CD4-positive, alpha-beta memory T cell (primary cell): ENCODE measurements at regions of chr5 and their contacts with region 1.

Region 1: GRCh38 chr5:671459-672328 is 21.5 kb downstream of the TPPP start:
- DNase-seq: peak; percentile 73 to 80 (median 77)
- H3K4me3 ChIP-seq: peak overlapping the region in 1 of 2 donors; percentile 4
- H3K4me3 Mint-ChIP-seq: peak overlapping the region in 5 of 8 donors; percentile 79 to 92 (median 82)
- H3K27ac ChIP-seq: peak overlapping the region; percentile 59
- H3K27ac Mint-ChIP-seq: peak overlapping the region; percentile 29 to 100 (median 99)
- H3K4me1 ChIP-seq: peaks cover 29% of the 10 kb centered on the region
- H3K4me1 Mint-ChIP-seq: peaks cover 7 to 26% (median 13%) of the 10 kb centered on the region in 4 donors
- H3K27me3 ChIP-seq: no peaks in the 10 kb centered on the region
- H3K27me3 Mint-ChIP-seq: peaks cover 0 to 3% of the 10 kb centered on the region in 2 donors

Region 2: DNA sequence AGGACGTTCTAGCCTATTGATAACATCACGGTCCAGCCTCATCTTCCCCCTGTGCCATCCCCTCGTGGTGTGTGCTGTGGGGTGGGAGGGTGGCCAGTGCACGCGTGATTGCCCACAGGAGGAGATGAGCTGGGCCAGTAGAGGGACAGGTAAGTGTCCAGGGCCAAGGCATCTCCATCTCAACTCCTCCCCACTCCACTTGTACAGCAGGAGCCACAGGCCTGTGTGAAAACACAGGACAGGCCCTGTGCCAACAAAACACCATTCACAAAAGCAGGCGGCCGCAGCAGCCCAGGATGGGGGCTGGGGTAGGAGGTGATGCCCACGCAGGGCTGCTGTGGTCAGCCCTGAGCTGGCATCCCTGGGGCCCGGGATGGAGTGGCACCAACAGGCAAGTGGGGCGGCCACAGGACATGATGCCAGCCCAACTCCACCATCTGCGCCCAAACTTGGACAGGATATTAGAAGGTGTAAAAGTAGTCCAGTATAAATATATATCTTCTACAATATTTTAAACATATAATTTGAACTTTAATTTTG is 11.1 kb before region 1 on chr5:
- CTCF ChIA-PET with region 1: no interaction called
- POLR2A ChIA-PET with region 1: no interaction called
- intact Hi-C with region 1: no loop called
- DNase-seq: no peak
- H3K4me3 ChIP-seq: no peak overlapping the region
- H3K4me3 Mint-ChIP-seq: no peak overlapping the region
- H3K27ac ChIP-seq: no peak overlapping the region
- H3K27ac Mint-ChIP-seq: peak overlapping the region in 3 of 7 donors; percentile 18 to 62 (median 30)
- H3K4me1 ChIP-seq: no peaks in the 10 kb centered on the region
- H3K4me1 Mint-ChIP-seq: peaks cover 0 to 4% (median 2%) of the 10 kb centered on the region in 4 donors
- H3K27me3 ChIP-seq: no peaks in the 10 kb centered on the region
- H3K27me3 Mint-ChIP-seq: no peaks in the 10 kb centered on the region

Region 3: GRCh38 chr5:691817-692528 is 20.3 kb after region 1 on chr5:
- CTCF ChIA-PET with region 1: no interaction called
- POLR2A ChIA-PET with region 1: no interaction called
- intact Hi-C with region 1: loop called (anchors 2 kb)
- DNase-seq: peak in 1 of 5 donors; percentile 11
- H3K4me3 ChIP-seq: peak overlapping the region in 1 of 2 donors; percentile 35
- H3K4me3 Mint-ChIP-seq: peak overlapping the region; percentile 41 to 82 (median 81)
- H3K27ac ChIP-seq: no peak overlapping the region
- H3K27ac Mint-ChIP-seq: peak overlapping the region in 4 of 7 donors; percentile 27 to 86 (median 55)
- H3K4me1 ChIP-seq: peaks cover 5% of the 10 kb centered on the region
- H3K4me1 Mint-ChIP-seq: peaks cover 0 to 5% (median 0%) of the 10 kb centered on the region in 4 donors
- H3K27me3 ChIP-seq: no peaks in the 10 kb centered on the region
- H3K27me3 Mint-ChIP-seq: peaks cover 0 to 1% of the 10 kb centered on the region in 2 donors

Region 4: GRCh38 chr5:902129-902916 is 230.6 kb after region 1 on chr5:
- CTCF ChIA-PET with region 1: interaction called, 21 read pairs
- POLR2A ChIA-PET with region 1: no interaction called
- intact Hi-C with region 1: loop called (anchors 2 kb)
- DNase-seq: no peak
- H3K4me3 ChIP-seq: no peak overlapping the region
- H3K4me3 Mint-ChIP-seq: no peak overlapping the region
- H3K27ac ChIP-seq: no peak overlapping the region
- H3K27ac Mint-ChIP-seq: peak overlapping the region in 2 of 7 donors; percentile 5 to 43
- H3K4me1 ChIP-seq: no peaks in the 10 kb centered on the region
- H3K4me1 Mint-ChIP-seq: peaks cover 0 to 2% (median 0%) of the 10 kb centered on the region in 4 donors
- H3K27me3 ChIP-seq: no peaks in the 10 kb centered on the region
- H3K27me3 Mint-ChIP-seq: no peaks in the 10 kb centered on the region